HepG2 (cell line): ENCODE measurements at regions of chr1 and their contacts with region 1.

Region 1: DNA sequence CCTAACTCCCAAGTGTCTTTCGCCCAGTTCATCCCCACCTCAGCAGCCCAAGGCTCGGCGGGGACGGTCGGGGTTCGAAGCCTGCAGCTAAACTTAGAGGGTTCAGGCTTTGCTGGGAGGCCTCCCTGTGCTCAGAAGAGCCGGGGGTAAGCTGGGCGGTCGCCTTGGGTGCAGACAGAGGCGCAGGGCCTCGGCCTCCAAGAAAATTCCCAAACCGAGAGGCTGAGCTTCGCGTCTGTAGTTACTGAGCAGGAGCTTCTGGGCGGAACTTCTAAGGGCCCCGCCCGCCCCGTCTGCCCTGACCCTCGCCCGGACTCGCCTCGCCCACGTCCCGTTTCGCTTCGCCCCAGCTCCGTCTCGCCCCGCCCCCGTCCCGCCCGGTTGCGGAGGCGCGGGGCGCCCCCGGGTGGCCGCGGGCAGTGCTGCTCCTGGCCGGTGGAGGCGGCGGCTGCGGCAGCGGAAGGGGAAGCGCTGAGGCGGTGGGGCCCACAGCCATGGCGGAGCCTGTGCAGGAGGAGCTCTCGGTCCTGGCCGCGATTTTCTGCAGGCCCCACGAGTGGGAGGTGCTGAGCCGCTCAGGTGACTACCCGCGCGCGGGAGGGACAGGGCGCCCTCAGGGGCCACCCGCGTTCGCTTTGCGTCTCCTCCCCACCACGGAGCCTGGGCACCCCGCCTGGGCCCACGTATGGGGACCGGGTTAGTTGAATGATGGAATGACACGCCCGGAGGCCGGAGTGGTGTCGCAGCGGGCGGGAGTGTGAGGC is at the start of gene RWDD3:
- DNase-seq: peak; percentile 64
- ATAC-seq: peak; percentile 92
- H3K4me3 ChIP-seq: peak within 1 kb of the TSS; percentile 82 to 98 (median 98)
- H3K27ac ChIP-seq: peak within 1 kb of the TSS; percentile 95
- H3K4me1 ChIP-seq: peaks cover 53% of the 10 kb centered on the region
- H3K27me3 ChIP-seq: no peaks in the 10 kb centered on the region; a peak in 1 of 5 replicates
- CTCF ChIP-seq: peak; percentile 86
- EP300 ChIP-seq: peak in 1 of 2 experiments; percentile 18; a peak in 1 of 4 replicates
- POLR2A ChIP-seq: peak; percentile 83 to 91
- RAD21 ChIP-seq: peak; percentile 96
- total RNA-seq, gene RWDD3: 21.2 and 22.7 TPM in 2 replicates

Region 2: DNA sequence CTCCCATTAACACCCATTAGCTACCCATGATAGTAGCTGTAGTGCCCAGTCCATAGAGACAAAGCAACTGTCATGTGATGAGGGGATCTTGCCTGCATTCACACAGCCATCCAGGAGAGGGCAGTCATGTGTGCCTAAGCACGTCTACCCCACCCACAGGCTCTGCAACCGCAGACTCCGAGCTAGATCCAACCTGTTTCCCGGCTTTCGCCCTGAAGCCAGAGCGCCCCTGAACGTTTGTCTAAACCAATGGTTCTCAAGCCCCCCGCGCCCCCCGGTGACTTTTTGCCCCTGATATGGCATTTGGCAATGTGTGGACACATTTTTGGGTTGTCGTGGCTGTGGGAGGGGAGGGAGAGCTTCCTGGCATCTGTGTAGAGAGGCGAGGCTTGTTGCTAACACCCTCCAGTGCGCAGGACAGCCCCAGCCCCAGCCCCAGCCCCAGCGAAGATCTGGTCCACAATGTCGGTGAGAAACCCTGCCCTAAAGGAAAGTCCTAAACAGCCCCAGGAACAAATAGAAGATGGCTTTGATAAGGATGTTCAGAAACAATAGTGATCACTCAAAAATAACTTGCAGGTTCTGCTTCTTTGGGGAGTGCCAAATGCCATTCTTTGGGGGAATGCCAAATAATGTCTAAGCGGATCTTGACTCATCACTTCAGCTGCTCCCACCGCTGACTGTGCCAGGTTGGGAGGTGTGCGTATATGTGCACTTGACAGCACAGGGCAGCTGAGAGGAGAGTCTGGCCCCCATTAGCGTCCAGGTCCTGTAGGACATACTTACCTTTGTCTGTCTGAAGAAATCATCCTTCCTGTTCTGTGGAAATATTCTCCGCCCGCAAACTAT is 379.2 kb before region 1 on chr1:
- CTCF ChIA-PET with region 1: no interaction called
- POLR2A ChIA-PET with region 1: interaction called, 8 read pairs
- in situ Hi-C with region 1: loop called (anchors 25 kb)
- intact Hi-C with region 1: loop called (anchors 2 kb)
- DNase-seq: peak; percentile 74
- ATAC-seq: peak; percentile 99
- H3K4me3 ChIP-seq: peak overlapping the region in 1 of 3 experiments; percentile 60; a peak in 1 of 6 replicates
- H3K27ac ChIP-seq: no peak overlapping the region
- H3K4me1 ChIP-seq: peaks cover 15% of the 10 kb centered on the region
- H3K27me3 ChIP-seq: no peaks in the 10 kb centered on the region
- CTCF ChIP-seq: peak; percentile 98
- EP300 ChIP-seq: no peak
- POLR2A ChIP-seq: no peak
- RAD21 ChIP-seq: peak; percentile 95

Region 3: GRCh38 chr1:95043141-95043980 is 190.6 kb before region 1 on chr1:
- CTCF ChIA-PET with region 1: no interaction called
- POLR2A ChIA-PET with region 1: interaction called, 4 read pairs
- in situ Hi-C with region 1: no loop called
- intact Hi-C with region 1: loop called (anchors 1 kb)
- DNase-seq: peak; percentile 77
- ATAC-seq: peak; percentile 91
- H3K4me3 ChIP-seq: no peak overlapping the region
- H3K27ac ChIP-seq: no peak overlapping the region
- H3K4me1 ChIP-seq: peaks cover 17% of the 10 kb centered on the region
- H3K27me3 ChIP-seq: no peaks in the 10 kb centered on the region
- CTCF ChIP-seq: peak; percentile 95
- EP300 ChIP-seq: no peak
- POLR2A ChIP-seq: no peak
- RAD21 ChIP-seq: peak; percentile 95

Region 4: GRCh38 chr1:95072532-95073419 is 161.1 kb before region 1 on chr1 and contains the start of gene ALG14:
- CTCF ChIA-PET with region 1: no interaction called
- POLR2A ChIA-PET with region 1: interaction called, 36 read pairs
- in situ Hi-C with region 1: no loop called
- intact Hi-C with region 1: loop called (anchors 1 kb)
- DNase-seq: peak; percentile 91
- ATAC-seq: peak; percentile 95
- H3K4me3 ChIP-seq: peak within 1 kb of the TSS; percentile 90 to 96 (median 93)
- H3K27ac ChIP-seq: peak within 1 kb of the TSS; percentile 80
- H3K4me1 ChIP-seq: peaks cover 66% of the 10 kb centered on the region
- H3K27me3 ChIP-seq: no peaks in the 10 kb centered on the region
- CTCF ChIP-seq: peak; percentile 19; the same call in 1 of the 2 replicates
- EP300 ChIP-seq: no peak
- POLR2A ChIP-seq: peak; percentile 61 to 80
- RAD21 ChIP-seq: 0 out of 2 replicates have a peak, but pooled peaks have one; percentile 9
- total RNA-seq, gene ALG14: 6.1 and 12.7 TPM in 2 replicates

Region 5: DNA sequence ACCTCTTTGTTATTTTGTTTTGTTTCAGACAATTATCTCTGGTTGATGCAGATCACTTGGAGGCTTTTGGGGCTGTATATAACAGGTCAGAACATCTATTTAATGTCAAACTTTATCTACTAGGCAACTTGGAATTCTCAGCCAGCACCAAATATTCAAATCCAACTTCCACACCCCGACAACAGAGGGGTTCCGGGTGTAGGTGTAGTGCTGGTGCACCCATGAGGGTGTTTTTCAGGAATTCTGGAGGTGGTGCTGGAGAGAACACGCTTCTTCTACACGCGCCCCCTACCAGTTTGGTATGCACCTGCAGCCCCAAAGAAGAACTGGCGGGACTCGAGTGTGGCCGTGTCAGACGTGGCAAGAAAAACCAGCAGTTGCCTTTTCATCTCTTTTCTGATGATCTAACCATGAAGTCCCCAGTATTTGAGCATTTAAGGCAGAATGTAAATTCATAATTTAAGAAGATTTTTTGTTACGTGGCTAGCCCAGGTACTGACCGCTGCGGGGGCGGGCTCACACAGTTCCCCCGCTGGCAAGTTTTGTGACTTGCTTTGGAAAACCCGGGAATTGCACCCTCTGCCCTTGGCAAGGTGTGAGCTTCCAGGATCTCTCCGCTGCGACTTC is 117.2 kb before region 1 on chr1:
- CTCF ChIA-PET with region 1: interaction called, 6 read pairs
- POLR2A ChIA-PET with region 1: interaction called, 26 read pairs
- in situ Hi-C with region 1: no loop called
- intact Hi-C with region 1: loop called (anchors 1 kb)
- DNase-seq: peak; percentile 77
- ATAC-seq: peak; percentile 82
- H3K4me3 ChIP-seq: peak overlapping the region; percentile 72 to 92 (median 89)
- H3K27ac ChIP-seq: peak overlapping the region; percentile 88
- H3K4me1 ChIP-seq: peaks cover 55% of the 10 kb centered on the region
- H3K27me3 ChIP-seq: no peaks in the 10 kb centered on the region; a peak in 1 of 5 replicates
- CTCF ChIP-seq: peak; percentile 83
- EP300 ChIP-seq: no peak
- POLR2A ChIP-seq: no peak
- RAD21 ChIP-seq: peak; percentile 33

Region 6: GRCh38 chr1:95169544-95169943 is 64.4 kb before region 1 on chr1:
- CTCF ChIA-PET with region 1: no interaction called
- POLR2A ChIA-PET with region 1: no interaction called
- in situ Hi-C with region 1: no loop called
- intact Hi-C with region 1: loop called (anchors 5 kb)
- DNase-seq: peak; percentile 46
- ATAC-seq: peak; percentile 63
- H3K4me3 ChIP-seq: no peak overlapping the region
- H3K27ac ChIP-seq: peak overlapping the region; percentile 1
- H3K4me1 ChIP-seq: peaks cover 11% of the 10 kb centered on the region
- H3K27me3 ChIP-seq: no peaks in the 10 kb centered on the region
- CTCF ChIP-seq: no peak
- EP300 ChIP-seq: no peak
- POLR2A ChIP-seq: no peak
- RAD21 ChIP-seq: no peak

Region 7: DNA sequence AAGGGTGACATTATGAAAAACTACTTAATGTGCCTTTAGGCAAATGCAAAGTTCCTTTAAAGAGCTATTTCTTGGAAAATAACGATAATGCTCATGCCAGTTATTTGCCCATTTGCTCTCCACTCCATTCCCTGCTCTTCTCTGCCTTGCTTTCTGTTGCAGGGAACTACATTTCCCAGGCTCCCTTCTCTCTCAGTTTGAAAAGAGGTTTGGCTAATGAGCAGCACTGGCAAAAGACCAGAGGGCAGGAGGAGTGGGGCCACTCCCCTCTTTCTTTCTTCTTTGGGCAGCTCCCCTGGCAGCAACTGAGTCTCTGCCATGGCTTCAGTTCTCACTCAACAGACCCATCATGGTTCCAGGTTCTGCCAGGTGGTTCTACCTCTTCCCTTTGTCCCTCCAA is 130.6 kb after region 1 on chr1:
- CTCF ChIA-PET with region 1: no interaction called
- POLR2A ChIA-PET with region 1: no interaction called
- in situ Hi-C with region 1: no loop called
- intact Hi-C with region 1: no loop called
- DNase-seq: no peak
- ATAC-seq: no peak
- H3K4me3 ChIP-seq: no peak overlapping the region
- H3K27ac ChIP-seq: no peak overlapping the region
- H3K4me1 ChIP-seq: no peaks in the 10 kb centered on the region
- H3K27me3 ChIP-seq: no peaks in the 10 kb centered on the region
- CTCF ChIP-seq: no peak
- EP300 ChIP-seq: no peak
- POLR2A ChIP-seq: no peak
- RAD21 ChIP-seq: no peak